Activated naive CD8-positive, alpha-beta T cell treated with anti-CD3 and anti-CD28 coated beads, Interleukin-2, amount 10 ng/mL, durations not matched to agents 7 days and 5 days (primary cell): ENCODE measurements at regions of chr7 and their contacts with region 1.

Region 1: GRCh38 chr7:149147072-149147751 is at the start of gene ZNF398:
- DNase-seq: peak; percentile 90
- ATAC-seq: peak; percentile 79
- H3K4me3 Mint-ChIP-seq: peak within 1 kb of the TSS; percentile 89
- H3K27ac Mint-ChIP-seq: peak within 1 kb of the TSS; percentile 92
- H3K4me1 Mint-ChIP-seq: peaks cover 15% of the 10 kb centered on the region
- H3K27me3 Mint-ChIP-seq: no peaks in the 10 kb centered on the region
- total RNA-seq, gene ZNF398: 15.0 to 15.6 TPM

Region 2: GRCh38 chr7:149071641-149072437 is 75.4 kb before region 1 on chr7:
- POLR2A ChIA-PET with region 1: no interaction called
- DNase-seq: peak; percentile 55
- ATAC-seq: peak; percentile 54
- H3K4me3 Mint-ChIP-seq: peak overlapping the region; percentile 37
- H3K27ac Mint-ChIP-seq: no peak overlapping the region
- H3K4me1 Mint-ChIP-seq: peaks cover 7% of the 10 kb centered on the region
- H3K27me3 Mint-ChIP-seq: no peaks in the 10 kb centered on the region

Region 3: DNA sequence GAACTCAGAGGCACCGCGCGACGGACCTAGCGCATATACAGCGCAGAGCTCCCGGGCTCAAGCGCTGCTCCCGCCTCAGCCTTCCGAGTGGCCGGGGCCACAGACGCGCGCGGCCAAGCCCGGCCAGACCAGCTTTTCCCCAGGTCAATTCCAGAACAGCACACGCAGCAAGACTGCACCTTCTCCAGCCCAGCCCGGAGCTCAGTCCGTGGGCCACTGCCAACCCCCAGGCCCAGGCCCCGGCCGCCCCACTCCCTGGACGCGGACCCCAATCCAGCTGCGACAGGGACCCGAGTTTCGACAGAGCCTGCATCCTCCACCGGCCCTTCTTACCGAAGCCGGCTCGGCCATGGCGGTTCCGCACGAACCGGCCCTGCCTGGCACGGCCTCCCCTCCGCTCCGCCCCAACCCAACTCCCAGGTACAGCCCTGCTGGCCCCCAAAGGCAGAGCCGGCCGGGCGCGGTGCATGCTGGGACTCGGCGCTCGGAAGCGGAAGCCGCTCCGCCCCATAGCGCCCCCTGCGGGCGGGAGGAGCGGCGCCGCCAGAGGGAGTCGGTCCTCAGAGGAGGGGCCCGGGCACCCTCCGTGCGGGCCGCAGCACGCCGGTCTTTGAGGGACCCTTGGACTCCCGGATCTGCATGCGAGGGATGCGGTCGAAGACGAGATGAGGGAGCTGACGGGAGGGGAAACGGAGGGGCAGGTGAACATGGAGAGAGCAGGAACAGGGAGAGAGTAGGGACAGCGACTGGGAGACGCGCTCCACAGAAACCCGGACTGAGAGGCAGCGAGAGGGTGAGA is 21.1 kb before region 1 on chr7 and contains the start of gene ZNF425:
- POLR2A ChIA-PET with region 1: interaction called, 52 read pairs
- DNase-seq: peak; percentile 99
- ATAC-seq: peak; percentile 88
- H3K4me3 Mint-ChIP-seq: peak within 1 kb of the TSS; percentile 100
- H3K27ac Mint-ChIP-seq: peak within 1 kb of the TSS; percentile 100
- H3K4me1 Mint-ChIP-seq: peaks cover 20% of the 10 kb centered on the region
- H3K27me3 Mint-ChIP-seq: no peaks in the 10 kb centered on the region
- total RNA-seq, gene ZNF425: 1.0 to 1.4 TPM

Region 4: GRCh38 chr7:149171892-149172533 is 24.8 kb after region 1 on chr7:
- POLR2A ChIA-PET with region 1: no interaction called
- DNase-seq: no peak
- ATAC-seq: no peak
- H3K4me3 Mint-ChIP-seq: no peak overlapping the region
- H3K27ac Mint-ChIP-seq: peak overlapping the region; percentile 11
- H3K4me1 Mint-ChIP-seq: peaks cover 8% of the 10 kb centered on the region
- H3K27me3 Mint-ChIP-seq: no peaks in the 10 kb centered on the region